ENCODE measurements at regions of chr2 and their contacts with region 1.

Region 1: DNA sequence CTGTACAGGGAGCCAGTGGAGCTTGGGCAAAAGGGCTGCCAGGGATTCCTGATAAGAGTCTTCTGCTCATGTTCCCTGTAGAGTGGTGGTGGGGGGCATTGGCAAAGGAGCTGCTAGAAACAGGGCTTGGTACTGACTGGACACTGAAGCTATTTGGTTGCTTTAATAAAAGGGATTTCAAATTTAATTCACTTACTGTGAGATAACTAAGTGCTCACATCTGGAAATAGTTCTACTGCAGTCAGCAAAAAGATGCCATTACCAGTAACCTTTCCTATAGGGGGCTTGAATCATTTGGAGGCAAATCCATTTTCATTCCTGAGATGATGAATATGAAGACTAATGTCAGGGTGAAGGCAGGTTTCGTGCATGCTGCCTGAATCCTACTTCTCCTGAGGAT is 94.3 kb upstream of the DOCK10 start:
- DNase-seq: no peak
- H3K4me3 Mint-ChIP-seq: no peak overlapping the region
- H3K27ac Mint-ChIP-seq: no peak overlapping the region
- H3K4me1 Mint-ChIP-seq: no peaks in the 10 kb centered on the region
- H3K27me3 Mint-ChIP-seq: no peaks in the 10 kb centered on the region
- CTCF ChIP-seq: no peak

Region 2: GRCh38 chr2:225112362-225113126 is 24.0 kb before region 1 on chr2:
- CTCF ChIA-PET with region 1: no interaction called
- POLR2A ChIA-PET with region 1: no interaction called
- intact Hi-C with region 1: loop called (anchors 1 kb)
- DNase-seq: no peak
- H3K4me3 Mint-ChIP-seq: no peak overlapping the region
- H3K27ac Mint-ChIP-seq: no peak overlapping the region
- H3K4me1 Mint-ChIP-seq: no peaks in the 10 kb centered on the region
- H3K27me3 Mint-ChIP-seq: no peaks in the 10 kb centered on the region
- CTCF ChIP-seq: no peak

Measured in MCF 10A (cell line).